ENCODE measurements at regions of chr15 and their contacts with region 1.

Region 1: DNA sequence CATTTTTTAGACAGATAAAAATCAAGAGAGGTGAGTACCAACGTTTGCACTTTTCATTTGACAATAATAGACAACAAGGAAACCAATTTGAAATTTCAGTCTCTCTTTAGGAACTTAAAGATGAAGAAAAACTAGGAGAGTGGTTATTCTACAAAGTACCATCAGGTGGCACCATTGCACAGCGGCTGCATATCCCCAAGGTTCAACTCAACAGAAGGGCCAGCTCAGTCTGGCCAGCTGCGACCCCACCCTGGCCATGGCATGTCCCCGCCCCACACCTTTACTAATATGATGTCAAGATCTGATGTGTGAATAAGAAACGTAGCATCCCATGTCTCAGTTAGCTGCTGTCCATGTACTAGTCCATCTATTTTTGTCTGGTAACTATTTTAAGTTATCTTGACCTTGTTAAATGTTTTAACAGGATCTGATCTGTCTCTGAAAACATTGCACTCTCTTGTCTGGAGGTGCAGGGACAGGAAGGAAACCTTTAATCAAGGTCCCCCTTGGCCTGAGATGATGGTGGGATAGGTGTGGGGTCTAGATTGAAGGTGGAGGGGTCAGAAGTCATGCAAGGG is 35.5 kb upstream of the CGNL1 start:
- DNase-seq: peak; percentile 48
- ATAC-seq: peak; percentile 59

Region 2: DNA sequence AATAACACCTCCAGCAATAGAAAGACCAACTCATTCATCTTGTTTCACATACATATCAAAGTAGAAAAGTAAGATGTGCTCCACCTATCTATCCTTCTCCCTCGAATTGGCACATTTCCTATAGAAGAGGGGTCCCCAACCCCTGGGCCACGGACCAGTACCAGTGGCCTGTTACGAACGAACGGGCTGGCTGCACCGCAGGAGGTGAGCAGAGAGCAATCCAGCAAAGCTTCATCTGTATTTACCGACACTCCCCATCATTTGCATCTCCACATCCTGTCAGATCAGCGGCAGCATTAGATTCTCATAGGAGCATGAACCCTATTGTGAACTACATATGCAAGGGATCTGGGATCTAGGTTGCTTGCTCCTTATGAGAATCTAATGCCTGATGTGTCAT is 59.5 kb before region 1 on chr15:
- intact Hi-C with region 1: no loop called
- DNase-seq: no peak
- ATAC-seq: no peak

Region 3: DNA sequence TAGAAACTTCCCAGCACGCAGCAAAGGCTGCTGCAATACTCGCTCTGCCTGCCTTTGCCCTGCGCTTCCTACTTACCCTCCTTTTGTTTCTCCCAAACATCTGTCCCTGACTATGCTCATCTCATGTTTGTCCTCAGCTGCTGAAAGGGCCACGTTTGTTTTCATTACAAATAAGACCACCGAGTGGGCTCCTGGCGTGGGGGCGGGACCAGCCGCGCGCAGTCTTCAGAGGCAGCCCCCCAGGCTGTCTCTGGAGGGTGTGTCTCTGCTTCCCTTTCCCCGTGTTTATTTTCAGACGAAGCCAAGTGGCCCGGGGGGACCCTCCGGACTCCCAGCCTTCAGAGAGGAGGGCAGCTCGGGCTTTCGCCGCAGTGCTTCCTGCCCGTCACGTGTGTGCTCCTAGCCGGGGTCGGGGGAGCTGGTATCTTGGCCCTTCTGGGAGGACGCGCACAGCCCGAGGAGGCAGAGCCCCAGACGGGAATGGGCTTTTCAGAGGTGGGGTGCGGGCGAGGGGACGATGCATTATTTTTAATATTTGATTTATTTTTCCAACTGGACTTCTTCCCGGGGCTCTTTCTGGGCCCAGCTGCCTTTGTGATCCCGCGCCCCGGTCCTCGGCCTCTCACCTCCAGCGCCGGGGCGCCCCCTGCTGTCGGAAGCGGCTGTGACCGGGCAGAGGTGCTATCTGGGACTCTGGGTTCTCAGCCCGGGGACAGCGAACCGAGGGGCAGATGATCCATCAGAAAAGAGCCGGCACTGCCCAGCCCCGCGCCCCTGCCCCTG is 34.4 kb before region 1 on chr15:
- intact Hi-C with region 1: no loop called
- DNase-seq: peak; percentile 95
- ATAC-seq: peak; percentile 94

Region 4: GRCh38 chr15:57382215-57382614 is 41.4 kb after region 1 on chr15:
- intact Hi-C with region 1: no loop called
- DNase-seq: no peak
- ATAC-seq: peak; percentile 11

Region 5: DNA sequence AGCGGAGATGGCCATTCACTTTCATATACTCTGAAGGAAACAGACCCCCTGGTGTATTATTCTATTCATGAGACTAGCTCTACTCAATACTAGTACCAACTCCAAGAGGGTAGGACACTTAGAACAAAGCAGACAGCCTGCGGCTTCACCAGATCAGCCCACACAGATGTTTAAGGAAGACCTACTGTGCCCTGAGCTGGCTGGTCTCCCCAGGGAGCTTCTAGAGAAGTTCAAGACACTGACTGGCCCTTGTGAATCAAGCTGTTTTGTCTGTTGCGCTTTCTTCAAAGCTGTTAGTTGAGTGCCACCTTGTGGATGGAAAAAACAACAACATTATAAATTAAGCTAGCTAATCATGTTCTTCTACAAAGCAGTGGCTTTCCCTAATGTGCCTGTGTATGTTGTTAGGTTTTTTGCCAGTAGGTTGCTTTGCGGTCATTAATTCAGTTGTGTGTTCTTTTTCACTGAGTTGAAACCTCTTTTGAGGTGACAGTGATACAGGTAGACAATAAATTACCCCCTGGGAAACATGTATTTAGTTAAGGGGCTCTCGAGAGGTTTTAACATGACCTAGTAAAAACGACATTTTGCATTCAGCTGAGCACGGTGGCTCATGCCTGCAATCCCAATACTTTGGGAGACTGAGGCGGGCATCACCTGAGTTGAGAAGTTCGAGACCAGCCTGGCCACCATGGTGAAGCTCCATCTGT is 186.8 kb after region 1 on chr15:
- intact Hi-C with region 1: loop called (anchors 1 kb)
- DNase-seq: no peak
- ATAC-seq: peak; percentile 76

Measured in left ventricle myocardium superior (tissue), 1 donor.